Lower leg skin (tissue), 4 donors: ENCODE measurements at regions of chr1 and their contacts with region 1.

Region 1: GRCh38 chr1:197146197-197146889 is at the start of gene ASPM:
- DNase-seq: peak; percentile 93 to 99
- H3K4me3 ChIP-seq: peak within 1 kb of the TSS; percentile 61
- CTCF ChIP-seq: no peak
- POLR2A ChIP-seq: no peak
- total RNA-seq, gene ASPM: 2.8 to 7.0 (median 4.2) TPM

Region 2: GRCh38 chr1:195152475-195152874 is 1993.9 kb before region 1 on chr1:
- intact Hi-C with region 1: no loop called
- DNase-seq: no peak
- H3K4me3 ChIP-seq: no peak overlapping the region
- CTCF ChIP-seq: no peak
- POLR2A ChIP-seq: no peak

Region 3: DNA sequence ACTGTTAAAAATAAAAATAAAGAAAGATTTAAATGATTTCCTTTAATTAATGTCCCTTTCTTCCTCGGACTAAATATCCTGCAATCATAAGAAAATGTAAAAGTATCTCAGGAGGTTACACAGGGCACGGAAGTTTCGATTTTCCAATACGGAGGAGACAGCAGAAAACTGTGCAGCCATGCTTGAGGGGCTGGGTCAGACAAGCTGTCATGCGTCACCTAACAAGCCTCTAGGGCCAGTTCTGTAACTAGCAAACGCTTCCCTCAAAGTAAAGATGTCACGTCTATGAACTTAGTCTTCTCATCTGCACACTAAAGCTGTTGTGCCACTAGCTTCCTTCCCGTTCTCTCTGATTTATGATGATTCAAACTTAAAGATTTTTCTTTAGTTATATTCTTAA is 292.9 kb before region 1 on chr1:
- intact Hi-C with region 1: loop called (anchors 10 kb)
- DNase-seq: no peak
- H3K4me3 ChIP-seq: no peak overlapping the region
- CTCF ChIP-seq: no peak
- POLR2A ChIP-seq: no peak

Region 4: GRCh38 chr1:197285526-197286205 is 139.3 kb after region 1 on chr1:
- intact Hi-C with region 1: no loop called
- DNase-seq: no peak
- H3K4me3 ChIP-seq: no peak overlapping the region
- CTCF ChIP-seq: no peak
- POLR2A ChIP-seq: no peak